Activated T-helper 1 cell treated with anti-CD3 and anti-CD28 coated beads, Interleukin-12 subunit alpha, Interleukin-12 subunit beta, Interleukin-2, Interleukin-4 antibody, amounts not matched to agents 30 ng/mL and 10 ng/mL and 1 ng/mL, durations not matched to agents 14 hours and 24 hours and 36 hours (primary cell): ENCODE measurements at regions of chr16 and their contacts with region 1.

Region 1: DNA sequence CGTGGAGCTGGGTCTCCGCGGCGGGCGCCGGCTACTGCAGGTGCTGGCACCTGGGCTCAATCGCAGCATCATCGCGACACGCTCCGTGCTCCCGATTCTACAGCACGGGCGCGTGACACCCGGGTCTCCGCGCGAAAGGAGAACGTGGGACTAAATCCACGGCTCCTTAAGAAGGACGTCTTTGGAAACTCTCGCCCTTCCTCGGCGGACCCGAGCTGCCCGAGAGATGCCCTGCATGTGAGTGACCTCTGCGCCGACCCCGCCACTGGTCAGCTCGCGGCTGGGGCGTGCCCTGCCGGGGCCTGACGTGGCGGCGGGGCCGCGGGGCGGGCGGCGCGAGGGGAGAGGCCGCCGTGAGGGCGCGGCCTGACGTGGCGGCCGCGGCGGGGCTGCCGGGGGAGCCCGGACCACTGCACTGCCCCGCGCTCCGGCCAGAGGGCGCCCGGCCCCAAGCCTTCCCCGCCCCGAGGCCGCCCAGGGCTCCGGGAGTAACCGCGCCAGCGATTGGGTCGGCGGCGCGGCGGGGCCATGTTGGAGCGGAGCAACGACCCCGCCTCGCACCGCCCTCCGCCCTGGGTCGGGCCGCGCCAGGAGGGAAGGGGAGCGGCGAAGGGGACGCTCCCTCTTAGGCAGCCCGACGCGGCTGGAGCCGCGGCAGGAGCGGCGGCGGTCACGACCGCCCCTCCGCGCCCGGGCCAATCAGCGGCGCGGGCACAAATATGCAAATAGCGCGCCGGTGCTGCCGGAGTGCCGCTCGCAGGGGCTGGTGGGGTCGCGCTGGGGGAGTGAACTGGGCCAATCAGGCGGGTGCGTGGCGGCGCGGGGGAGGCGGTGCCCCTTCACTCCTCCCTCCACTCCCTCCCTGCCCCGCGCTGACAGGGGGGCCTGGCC is 75.6 kb downstream of the CHD9 start:
- DNase-seq: peak; percentile 92
- H3K4me3 Mint-ChIP-seq: peak overlapping the region; percentile 80
- H3K27ac Mint-ChIP-seq: peak overlapping the region; percentile 79
- H3K4me1 Mint-ChIP-seq: peaks cover 6% of the 10 kb centered on the region
- H3K27me3 Mint-ChIP-seq: peaks cover 9% of the 10 kb centered on the region

Region 2: GRCh38 chr16:53105565-53105964 is 24.8 kb before region 1 on chr16:
- intact Hi-C with region 1: no loop called
- DNase-seq: no peak
- H3K4me3 Mint-ChIP-seq: no peak overlapping the region
- H3K27ac Mint-ChIP-seq: no peak overlapping the region
- H3K4me1 Mint-ChIP-seq: peaks cover 7% of the 10 kb centered on the region
- H3K27me3 Mint-ChIP-seq: peaks cover 1% of the 10 kb centered on the region

Region 3: DNA sequence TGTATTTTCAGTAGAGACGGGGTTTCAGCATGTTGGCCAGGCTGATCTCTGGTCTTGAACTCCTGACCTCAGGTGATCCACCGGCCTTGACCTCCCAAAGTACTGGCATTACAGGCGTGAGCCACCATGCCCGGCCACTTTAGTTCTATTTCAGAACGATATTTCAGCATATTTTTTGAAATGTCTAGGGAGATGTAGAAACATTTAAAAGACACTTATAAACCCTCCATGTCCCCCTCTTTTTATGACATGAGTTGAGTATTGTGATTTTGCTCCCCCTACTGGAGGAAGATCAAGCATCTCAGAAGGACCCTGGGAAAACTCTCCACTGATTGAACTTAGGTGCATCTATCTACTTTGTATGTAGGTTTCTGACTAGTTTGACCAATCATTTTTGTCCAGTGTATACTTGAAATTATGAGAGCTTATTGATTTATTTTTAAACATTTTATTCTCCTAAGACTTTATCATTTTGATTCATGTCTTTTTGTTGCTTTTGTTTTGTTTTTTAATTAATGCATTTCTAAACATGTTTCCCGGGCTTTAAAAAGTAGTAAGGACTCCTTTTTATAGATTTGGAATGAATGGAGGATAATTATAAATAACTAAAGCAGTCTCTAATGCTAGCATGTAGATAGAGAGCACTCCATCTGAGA is 29.5 kb after region 1 on chr16:
- intact Hi-C with region 1: loop called (anchors 1 kb)
- DNase-seq: no peak
- H3K4me3 Mint-ChIP-seq: no peak overlapping the region
- H3K27ac Mint-ChIP-seq: no peak overlapping the region
- H3K4me1 Mint-ChIP-seq: no peaks in the 10 kb centered on the region
- H3K27me3 Mint-ChIP-seq: no peaks in the 10 kb centered on the region

Region 4: DNA sequence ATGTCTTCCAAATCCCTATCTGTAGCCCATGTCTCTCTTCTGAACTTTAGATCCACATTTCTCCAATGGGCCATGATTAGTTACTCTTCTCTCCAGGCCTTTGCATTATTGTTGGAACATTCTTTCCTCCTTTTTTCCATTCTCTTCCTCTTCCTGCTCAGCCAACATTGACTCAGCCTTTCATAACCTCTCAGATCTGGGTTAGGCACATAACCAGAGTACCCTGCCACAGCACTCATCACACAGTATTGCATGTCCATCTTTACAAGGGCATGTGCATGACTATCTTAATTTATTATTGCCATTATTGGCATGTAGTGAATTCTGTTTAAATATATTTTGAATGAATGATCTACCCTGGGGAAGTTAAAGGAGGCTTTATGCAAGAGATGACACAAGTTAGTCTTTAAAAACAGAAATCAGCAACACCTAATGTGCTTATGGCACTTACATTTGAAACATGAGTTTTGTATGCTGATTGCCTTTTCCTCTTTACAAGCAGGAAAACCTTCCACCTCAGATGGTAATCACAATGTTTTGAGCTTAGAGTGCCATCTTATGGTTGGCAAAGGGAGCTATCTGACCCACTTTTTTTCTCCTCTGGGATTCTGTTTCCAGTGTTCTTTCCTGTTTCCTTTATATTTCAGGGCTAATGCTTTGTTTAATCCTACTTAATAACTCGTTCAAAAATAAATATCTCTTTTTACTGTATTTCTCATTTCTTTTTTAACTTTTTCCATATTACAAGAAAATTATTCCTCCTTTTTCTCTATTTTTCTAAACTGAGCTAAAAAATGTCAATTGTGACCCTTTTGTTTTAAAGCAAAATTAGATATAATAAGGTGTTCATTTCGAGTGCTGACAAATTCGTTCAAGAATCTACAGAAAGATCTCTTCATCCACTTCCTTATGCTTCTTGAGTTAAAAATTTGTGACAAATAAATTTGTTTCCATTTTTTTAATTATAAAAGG is 152.9 kb after region 1 on chr16:
- intact Hi-C with region 1: loop called (anchors 5 kb)
- DNase-seq: no peak
- H3K4me3 Mint-ChIP-seq: no peak overlapping the region
- H3K27ac Mint-ChIP-seq: no peak overlapping the region
- H3K4me1 Mint-ChIP-seq: no peaks in the 10 kb centered on the region
- H3K27me3 Mint-ChIP-seq: no peaks in the 10 kb centered on the region

Region 5: GRCh38 chr16:53457670-53458069 is 327.3 kb after region 1 on chr16:
- intact Hi-C with region 1: loop called (anchors 5 kb)
- DNase-seq: peak; percentile 80
- H3K4me3 Mint-ChIP-seq: peak overlapping the region; percentile 73
- H3K27ac Mint-ChIP-seq: peak overlapping the region; percentile 94
- H3K4me1 Mint-ChIP-seq: peaks cover 88% of the 10 kb centered on the region
- H3K27me3 Mint-ChIP-seq: no peaks in the 10 kb centered on the region

Region 6: GRCh38 chr16:53509906-53510703 is 379.7 kb after region 1 on chr16:
- intact Hi-C with region 1: loop called (anchors 2 kb)
- DNase-seq: peak; percentile 22
- H3K4me3 Mint-ChIP-seq: no peak overlapping the region
- H3K27ac Mint-ChIP-seq: no peak overlapping the region
- H3K4me1 Mint-ChIP-seq: peaks cover 62% of the 10 kb centered on the region
- H3K27me3 Mint-ChIP-seq: no peaks in the 10 kb centered on the region